ENCODE measurements at regions of chr1 and their contacts with region 1.

Region 1: DNA sequence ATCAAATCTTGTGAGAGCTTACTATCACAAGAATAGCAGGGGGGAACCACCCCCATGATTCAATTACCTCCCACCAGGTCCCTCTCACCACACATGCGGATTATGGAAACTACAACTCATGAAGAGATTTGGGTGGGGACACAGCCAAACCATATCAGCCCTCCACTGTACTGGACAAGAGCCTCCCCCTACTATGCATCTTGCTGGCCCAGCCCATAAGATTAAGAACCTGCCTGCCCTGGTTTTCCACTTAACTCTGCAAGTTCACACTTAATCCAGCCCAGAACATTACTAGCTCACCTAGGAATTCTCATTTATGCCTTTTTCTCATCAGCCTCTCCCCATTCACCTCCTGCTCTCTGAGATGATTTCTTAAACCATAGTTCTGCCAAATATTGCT is 18.0 kb upstream of the FBXO28 start:
- DNase-seq: no peak

Region 2: DNA sequence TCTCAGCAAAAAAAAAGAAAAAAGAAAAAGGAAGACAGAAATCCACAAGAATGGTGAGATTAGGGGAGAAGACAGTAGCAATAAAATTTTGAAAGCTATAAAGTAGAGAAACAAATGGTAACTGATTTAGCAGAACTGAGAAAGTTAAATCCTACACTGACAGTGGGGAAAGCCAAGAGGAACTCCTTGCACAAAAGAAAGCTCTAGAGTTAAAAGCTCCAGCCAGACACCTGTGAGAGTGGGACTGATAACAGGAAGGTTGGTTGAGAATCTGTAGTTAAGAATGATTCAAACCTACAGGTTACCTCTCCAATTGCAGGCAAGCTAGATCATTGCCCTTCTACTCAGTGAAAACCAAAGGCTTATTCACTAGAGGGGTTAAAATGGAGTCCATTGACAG is 41.7 kb after region 1 on chr1:
- intact Hi-C with region 1: loop called in 1 of 2 experiments (anchors 2 kb)
- DNase-seq: no peak

Region 3: GRCh38 chr1:224182866-224183590 is 87.2 kb after region 1 on chr1 and contains the start of gene DEGS1:
- intact Hi-C with region 1: no loop called
- DNase-seq: peak; percentile 92
- total RNA-seq, gene DEGS1: 91.5 to 109 TPM

Measured in posterior vena cava (tissue), 2 donors.